Pancreas (tissue), 10 donors: ENCODE measurements at regions of chr5 and their contacts with region 1.

Region 1: DNA sequence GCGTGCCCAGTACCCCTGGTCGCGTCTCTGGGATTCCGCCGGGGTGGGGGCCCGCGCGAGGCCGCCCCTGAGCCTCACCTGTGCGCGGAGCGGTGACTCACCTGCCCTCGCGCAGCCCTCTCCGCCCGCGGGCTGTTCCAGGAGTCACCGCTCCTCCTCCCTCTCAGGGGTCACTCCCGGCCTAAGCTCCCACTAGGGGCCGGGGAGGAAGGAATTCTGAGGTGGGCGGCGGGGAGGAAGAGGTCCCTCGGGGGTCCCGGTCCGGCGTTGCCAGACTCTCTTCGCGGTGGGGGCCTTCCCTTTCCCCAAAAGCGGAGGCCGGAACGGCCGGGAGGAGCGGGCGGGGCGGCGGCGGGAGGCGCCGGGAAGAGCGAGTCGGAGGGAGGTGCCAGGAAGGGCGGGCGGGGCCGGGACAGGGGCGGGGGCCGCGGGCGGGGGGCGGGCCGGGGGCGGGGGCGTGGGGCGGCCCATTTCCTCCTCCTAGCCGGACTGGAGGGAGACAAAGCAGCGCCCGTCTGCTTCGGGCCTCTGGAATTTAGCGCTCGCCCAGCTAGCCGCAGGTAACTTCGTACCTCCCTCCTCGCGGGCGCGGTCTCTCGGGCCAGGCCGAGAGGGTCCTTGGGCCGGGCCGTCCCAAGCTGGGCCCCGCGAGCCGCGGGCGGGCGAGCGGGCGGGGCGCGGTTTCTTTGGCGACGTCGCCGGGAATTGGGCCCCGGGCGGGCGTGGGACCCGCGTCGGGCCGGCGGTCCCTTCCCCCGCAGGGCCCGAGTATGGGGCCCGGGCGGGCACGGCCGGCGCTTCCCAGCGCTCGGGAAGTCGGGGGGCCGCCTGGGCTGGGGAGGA is at the start of gene CTNNA1:
- DNase-seq: peak; percentile 86 to 95 (median 90)
- ATAC-seq: peak; percentile 88 to 93 (median 90)
- H3K4me3 ChIP-seq: peak within 1 kb of the TSS; percentile 79 to 100 (median 90)
- H3K27ac ChIP-seq: peak within 1 kb of the TSS; percentile 97 to 99 (median 98)
- H3K4me1 ChIP-seq: peaks cover 0 to 11% (median 10%) of the 10 kb centered on the region in 3 donors
- H3K27me3 ChIP-seq: no peaks in the 10 kb centered on the region
- CTCF ChIP-seq: no peak
- total RNA-seq, gene CTNNA1: 105 to 193 (median 115) TPM

Region 2: DNA sequence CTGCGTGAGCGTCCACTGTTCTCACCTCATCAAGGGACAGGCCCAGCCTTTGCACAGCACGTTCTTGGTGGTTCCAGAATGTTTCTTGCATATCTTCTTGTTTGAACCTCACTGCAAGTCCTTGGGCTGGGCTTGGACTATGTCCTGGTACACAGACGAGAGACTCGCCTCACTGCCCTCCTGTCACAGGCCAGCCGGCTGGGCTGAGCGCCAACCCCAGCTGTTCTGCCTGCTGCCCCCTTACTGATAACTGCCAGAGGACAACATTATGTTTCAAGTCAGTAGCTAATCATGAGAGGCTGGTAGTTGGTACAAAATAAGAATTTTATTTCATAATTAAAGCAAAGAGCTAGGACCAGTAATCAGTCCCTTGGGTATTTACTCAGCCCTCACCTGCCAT is 174.8 kb after region 1 on chr5:
- intact Hi-C with region 1: no loop called
- DNase-seq: peak; percentile 58 to 90 (median 82)
- ATAC-seq: peak; percentile 73 to 92 (median 90)
- H3K4me3 ChIP-seq: no peak overlapping the region
- H3K27ac ChIP-seq: peak overlapping the region in 2 of 4 donors; percentile 41 to 48
- H3K4me1 ChIP-seq: peaks cover 0 to 13% (median 13%) of the 10 kb centered on the region in 3 donors
- H3K27me3 ChIP-seq: no peaks in the 10 kb centered on the region
- CTCF ChIP-seq: no peak

Region 3: DNA sequence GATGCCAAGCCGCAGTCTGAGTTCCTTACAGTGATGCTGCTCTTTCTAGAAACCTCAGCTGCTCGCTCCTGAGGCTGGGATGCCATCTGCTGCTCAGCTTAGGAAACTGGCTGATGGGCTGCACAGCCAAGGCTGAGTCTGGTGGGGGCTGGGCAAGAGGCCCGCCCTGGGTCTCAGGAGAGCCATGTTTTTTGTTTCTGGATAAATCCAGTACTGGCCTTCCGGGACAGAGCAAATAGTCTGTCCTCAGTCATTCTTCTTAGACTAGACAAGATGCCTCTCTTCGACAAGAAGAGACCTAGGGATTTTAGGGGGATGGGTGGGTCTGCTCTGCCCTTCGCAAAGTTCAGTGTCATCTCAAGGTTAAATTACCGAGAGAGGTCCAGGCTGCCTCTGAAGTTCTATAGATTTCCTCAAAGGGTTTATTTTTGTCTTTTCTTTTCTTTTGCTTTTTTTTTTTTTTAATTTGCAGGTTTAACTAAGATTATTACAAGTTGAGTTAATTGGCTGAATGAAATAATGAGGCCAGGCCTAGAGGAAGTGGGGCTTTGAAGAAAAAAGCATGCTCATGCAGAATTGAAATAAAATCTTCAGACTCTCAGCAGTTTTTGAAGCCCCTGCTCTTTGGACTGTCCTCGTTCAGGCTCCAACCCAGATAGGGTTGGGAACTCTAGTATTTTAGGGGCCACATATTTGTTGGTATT is 509.7 kb after region 1 on chr5:
- intact Hi-C with region 1: loop called in 1 of 3 experiments (anchors 10 kb)
- DNase-seq: peak; percentile 78 to 91 (median 78)
- ATAC-seq: peak; percentile 98 to 100 (median 100)
- H3K4me3 ChIP-seq: no peak overlapping the region
- H3K27ac ChIP-seq: no peak overlapping the region
- H3K4me1 ChIP-seq: no peaks in the 10 kb centered on the region
- H3K27me3 ChIP-seq: no peaks in the 10 kb centered on the region
- CTCF ChIP-seq: peak; percentile 23 to 79 (median 67)